Activated CD8-positive, alpha-beta T cell treated with anti-CD3 and anti-CD28 coated beads, Interleukin-2, amount 10 ng/mL, durations not matched to agents 7 days and 5 days (primary cell): ENCODE measurements at regions of chr15 and their contacts with region 1.

Region 1: GRCh38 chr15:63752075-63752684 is 81.6 kb downstream of the HERC1 start:
- DNase-seq: peak; percentile 66
- ATAC-seq: peak; percentile 69
- H3K4me3 Mint-ChIP-seq: no peak overlapping the region
- H3K27ac Mint-ChIP-seq: no peak overlapping the region
- H3K4me1 Mint-ChIP-seq: no peaks in the 10 kb centered on the region
- H3K27me3 Mint-ChIP-seq: no peaks in the 10 kb centered on the region

Region 2: DNA sequence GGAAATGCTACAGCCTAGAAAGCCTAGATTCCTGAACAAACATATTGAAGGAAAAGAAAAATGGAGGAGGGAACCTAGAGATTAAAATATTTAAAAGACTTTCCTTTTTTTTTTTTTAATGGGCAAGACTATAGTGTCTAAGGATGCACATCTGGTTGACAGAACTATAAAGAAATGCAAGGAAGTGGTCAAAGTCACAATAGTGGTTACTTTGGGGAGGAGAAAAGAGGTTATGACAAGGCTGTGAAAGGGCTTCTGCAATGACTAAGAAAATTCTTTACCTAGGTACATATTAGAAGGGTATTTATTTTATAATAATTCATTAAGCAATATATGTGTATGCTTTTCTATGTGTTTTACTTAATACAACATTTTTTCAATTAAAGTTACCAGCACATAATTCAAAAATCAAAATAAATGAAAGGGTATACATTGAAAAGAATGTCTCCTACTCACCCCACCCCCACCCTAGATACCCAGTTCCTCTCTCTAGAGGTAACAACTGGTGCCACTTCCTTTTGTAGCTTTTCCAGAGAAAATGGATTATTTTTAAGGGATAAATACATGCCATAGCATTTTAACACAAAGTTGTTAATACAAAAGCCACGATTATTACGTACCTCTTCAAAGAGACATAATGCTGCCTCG is 11.4 kb after region 1 on chr15:
- CTCF ChIA-PET with region 1: interaction called, 44 read pairs
- POLR2A ChIA-PET with region 1: no interaction called
- DNase-seq: peak; percentile 35
- ATAC-seq: peak; percentile 95
- H3K4me3 Mint-ChIP-seq: peak overlapping the region; percentile 61
- H3K27ac Mint-ChIP-seq: peak overlapping the region; percentile 79
- H3K4me1 Mint-ChIP-seq: peaks cover 41% of the 10 kb centered on the region
- H3K27me3 Mint-ChIP-seq: no peaks in the 10 kb centered on the region

Region 3: GRCh38 chr15:63833021-63833696 is 81.0 kb after region 1 on chr15:
- CTCF ChIA-PET with region 1: interaction called, 17 read pairs
- POLR2A ChIA-PET with region 1: interaction called, 3 read pairs
- DNase-seq: peak; percentile 49
- ATAC-seq: peak; percentile 69
- H3K4me3 Mint-ChIP-seq: peak overlapping the region; percentile 88
- H3K27ac Mint-ChIP-seq: peak overlapping the region; percentile 84
- H3K4me1 Mint-ChIP-seq: peaks cover 43% of the 10 kb centered on the region
- H3K27me3 Mint-ChIP-seq: peaks cover 8% of the 10 kb centered on the region

Region 4: GRCh38 chr15:63970621-63971426 is 218.6 kb after region 1 on chr15:
- CTCF ChIA-PET with region 1: interaction called, 11 read pairs
- POLR2A ChIA-PET with region 1: no interaction called
- DNase-seq: peak; percentile 44
- ATAC-seq: peak; percentile 76
- H3K4me3 Mint-ChIP-seq: peak overlapping the region; percentile 68
- H3K27ac Mint-ChIP-seq: peak overlapping the region; percentile 96
- H3K4me1 Mint-ChIP-seq: peaks cover 44% of the 10 kb centered on the region
- H3K27me3 Mint-ChIP-seq: no peaks in the 10 kb centered on the region

Region 5: GRCh38 chr15:64046347-64047153 is 294.4 kb after region 1 on chr15 and contains the start of gene DAPK2:
- CTCF ChIA-PET with region 1: interaction called, 76 read pairs
- POLR2A ChIA-PET with region 1: interaction called, 3 read pairs
- DNase-seq: peak; percentile 62
- ATAC-seq: peak; percentile 95
- H3K4me3 Mint-ChIP-seq: peak within 1 kb of the TSS; percentile 70
- H3K27ac Mint-ChIP-seq: peak within 1 kb of the TSS; percentile 31
- H3K4me1 Mint-ChIP-seq: peaks cover 13% of the 10 kb centered on the region
- H3K27me3 Mint-ChIP-seq: peaks cover 34% of the 10 kb centered on the region
- total RNA-seq, gene DAPK2: 1.3 to 1.5 TPM

Region 6: DNA sequence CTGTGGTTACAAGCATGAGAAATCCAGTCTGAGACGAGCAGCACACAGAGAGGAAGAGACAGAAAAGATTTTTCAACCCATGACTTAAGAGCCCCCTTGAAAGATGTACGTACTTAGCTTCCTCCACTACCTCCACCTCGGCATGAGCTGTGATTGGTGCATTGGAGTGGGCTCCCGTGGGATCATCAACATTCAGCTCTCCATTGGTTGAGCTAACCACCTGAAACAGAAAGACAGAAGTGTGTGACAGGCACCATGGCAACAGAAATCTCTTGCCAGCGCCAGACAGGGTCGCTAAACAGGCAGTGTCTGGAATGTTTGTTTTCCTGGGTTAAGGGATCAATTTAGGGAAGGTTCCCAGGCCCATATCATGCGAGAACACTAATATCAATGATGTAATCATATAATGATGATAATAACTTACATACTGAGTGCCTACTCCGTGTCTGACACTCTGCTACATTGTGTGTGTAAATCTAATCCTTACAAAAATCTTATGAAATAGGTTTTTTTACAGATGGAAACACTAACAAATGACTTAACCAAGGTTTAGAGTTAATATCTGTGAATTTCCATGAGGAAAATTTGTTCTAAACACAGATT is 428.2 kb after region 1 on chr15:
- CTCF ChIA-PET with region 1: no interaction called
- POLR2A ChIA-PET with region 1: no interaction called
- DNase-seq: no peak
- ATAC-seq: no peak
- H3K4me3 Mint-ChIP-seq: no peak overlapping the region
- H3K27ac Mint-ChIP-seq: no peak overlapping the region
- H3K4me1 Mint-ChIP-seq: no peaks in the 10 kb centered on the region
- H3K27me3 Mint-ChIP-seq: no peaks in the 10 kb centered on the region